HCT116 (cell line): ENCODE measurements at regions of chr2 and their contacts with region 1.

Region 1: DNA sequence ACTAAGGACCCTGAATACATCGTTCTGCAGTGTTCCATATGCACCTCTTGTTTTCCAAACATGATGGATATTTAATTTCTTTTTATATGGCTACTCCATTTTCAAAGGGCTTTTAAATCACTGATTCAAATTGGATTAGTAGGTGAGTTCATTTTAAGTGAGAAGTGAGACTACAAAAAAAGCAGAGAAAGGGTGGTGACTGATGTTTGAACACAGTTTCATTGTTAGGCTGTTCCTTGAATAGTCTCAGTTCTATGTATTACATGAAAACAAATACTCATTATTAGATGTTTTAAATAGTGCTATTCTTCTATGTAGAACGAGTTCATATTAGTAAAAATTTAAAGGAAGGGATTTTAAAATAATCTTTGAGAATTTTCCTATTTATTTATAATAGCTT is 72.7 kb upstream of the STON1 start:
- DNase-seq: no peak
- ATAC-seq: no peak
- H3K4me3 ChIP-seq: no peak overlapping the region
- H3K27ac ChIP-seq: no peak overlapping the region
- H3K4me1 ChIP-seq: no peaks in the 10 kb centered on the region
- H3K27me3 ChIP-seq: no peaks in the 10 kb centered on the region
- CTCF ChIP-seq: no peak
- POLR2A ChIP-seq: no peak
- RAD21 ChIP-seq: no peak

Region 2: GRCh38 chr2:47457268-47457667 is 1000.0 kb before region 1 on chr2:
- CTCF ChIA-PET with region 1: no interaction called
- POLR2A ChIA-PET with region 1: no interaction called
- RAD21 ChIA-PET with region 1: no interaction called
- intact Hi-C with region 1: no loop called
- DNase-seq: no peak
- ATAC-seq: no peak
- H3K4me3 ChIP-seq: no peak overlapping the region
- H3K27ac ChIP-seq: no peak overlapping the region
- H3K4me1 ChIP-seq: no peaks in the 10 kb centered on the region
- H3K27me3 ChIP-seq: no peaks in the 10 kb centered on the region
- CTCF ChIP-seq: no peak
- POLR2A ChIP-seq: no peak
- RAD21 ChIP-seq: no peak

Region 3: DNA sequence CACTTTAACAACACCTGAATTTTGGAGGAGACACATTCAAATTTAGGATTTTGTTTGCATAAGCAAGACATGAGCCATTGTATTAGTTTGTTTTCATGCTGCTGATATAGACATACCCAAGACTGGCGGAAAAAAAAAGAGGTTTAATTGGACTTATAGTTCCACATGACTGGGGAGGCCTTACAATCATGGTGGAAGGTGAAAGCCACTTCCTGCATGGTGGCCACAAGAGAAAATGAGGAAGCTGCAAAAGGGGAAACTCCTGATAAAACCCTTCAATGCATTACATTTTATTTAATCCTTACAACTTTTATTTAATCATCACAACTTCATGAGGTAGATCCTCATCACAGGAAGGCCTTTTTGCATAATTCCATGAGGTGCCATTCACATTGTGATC is 169.3 kb before region 1 on chr2:
- CTCF ChIA-PET with region 1: no interaction called
- POLR2A ChIA-PET with region 1: no interaction called
- RAD21 ChIA-PET with region 1: no interaction called
- intact Hi-C with region 1: no loop called
- DNase-seq: no peak
- ATAC-seq: no peak
- H3K4me3 ChIP-seq: no peak overlapping the region
- H3K27ac ChIP-seq: no peak overlapping the region
- H3K4me1 ChIP-seq: no peaks in the 10 kb centered on the region
- H3K27me3 ChIP-seq: no peaks in the 10 kb centered on the region
- CTCF ChIP-seq: no peak
- POLR2A ChIP-seq: no peak
- RAD21 ChIP-seq: no peak

Region 4: DNA sequence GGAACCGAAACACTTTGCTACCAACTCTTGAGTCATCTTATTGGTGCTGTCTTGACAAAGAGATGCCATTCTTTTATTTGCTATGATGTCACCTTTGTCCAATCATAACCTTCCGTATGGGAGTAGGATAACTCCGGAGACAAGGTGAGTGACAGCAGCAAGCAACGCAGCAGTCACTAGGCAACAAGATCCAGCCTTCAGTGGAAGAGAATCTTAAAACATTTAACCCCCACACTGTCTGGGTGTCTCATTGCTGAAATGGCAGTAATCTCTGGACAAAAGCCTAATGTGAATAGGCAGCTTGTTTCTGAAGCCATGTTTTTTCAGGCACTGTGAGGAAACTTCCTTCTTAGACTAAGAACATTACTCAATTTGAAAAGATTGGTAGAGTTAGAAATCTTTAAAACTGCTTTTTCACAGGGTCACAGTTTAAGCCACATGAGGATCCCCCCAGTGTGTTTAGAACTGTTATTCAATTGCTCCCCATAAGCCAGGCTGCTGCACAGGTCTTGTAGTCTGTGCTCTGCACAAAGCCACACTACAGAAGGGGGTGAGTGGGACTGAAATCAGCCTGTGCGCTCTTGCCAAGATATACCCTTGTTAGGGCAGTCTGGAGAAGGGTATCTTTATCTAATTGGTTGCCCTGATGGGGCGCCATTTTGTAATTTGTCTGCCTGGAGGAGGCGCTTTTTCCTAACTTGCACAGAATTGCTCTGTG is 58.8 kb before region 1 on chr2:
- CTCF ChIA-PET with region 1: no interaction called
- POLR2A ChIA-PET with region 1: no interaction called
- RAD21 ChIA-PET with region 1: no interaction called
- intact Hi-C with region 1: no loop called
- DNase-seq: no peak
- ATAC-seq: no peak
- H3K4me3 ChIP-seq: no peak overlapping the region
- H3K27ac ChIP-seq: no peak overlapping the region
- H3K4me1 ChIP-seq: no peaks in the 10 kb centered on the region
- H3K27me3 ChIP-seq: no peaks in the 10 kb centered on the region
- CTCF ChIP-seq: no peak
- POLR2A ChIP-seq: no peak
- RAD21 ChIP-seq: no peak

Region 5: GRCh38 chr2:48471048-48471474 is 13.8 kb after region 1 on chr2:
- CTCF ChIA-PET with region 1: interaction called, 11 read pairs
- POLR2A ChIA-PET with region 1: no interaction called
- RAD21 ChIA-PET with region 1: interaction called in 1 of 2 experiments, 3 read pairs
- intact Hi-C with region 1: no loop called
- DNase-seq: peak; percentile 45
- ATAC-seq: peak; percentile 91
- H3K4me3 ChIP-seq: no peak overlapping the region
- H3K27ac ChIP-seq: no peak overlapping the region
- H3K4me1 ChIP-seq: peaks cover 4 to 5% of the 10 kb centered on the region in 2 experiments
- H3K27me3 ChIP-seq: no peaks in the 10 kb centered on the region
- CTCF ChIP-seq: peak; percentile 51 to 85 (median 59); a peak in 5 of 6 replicates
- POLR2A ChIP-seq: no peak
- RAD21 ChIP-seq: peak; percentile 64

Region 6: DNA sequence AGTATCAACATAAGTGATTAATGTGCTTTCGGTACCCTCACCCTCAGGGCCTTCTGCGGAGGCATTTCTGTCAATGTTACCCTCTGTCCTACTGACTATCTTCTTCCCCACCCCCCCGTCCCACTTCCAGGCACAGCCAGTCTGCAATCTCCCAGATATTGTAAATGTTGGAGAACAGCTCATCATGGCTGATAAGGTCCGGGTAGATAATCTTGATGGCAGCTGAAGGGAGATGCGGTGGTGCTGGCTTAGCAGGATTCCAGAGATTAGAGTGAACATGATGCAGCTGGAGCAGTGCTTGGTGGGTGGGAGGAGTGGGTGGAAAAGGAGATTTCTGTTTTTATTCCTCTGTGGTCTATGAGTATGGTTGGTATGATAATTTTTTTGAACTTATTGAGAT is 175.9 kb after region 1 on chr2:
- CTCF ChIA-PET with region 1: no interaction called
- POLR2A ChIA-PET with region 1: no interaction called
- RAD21 ChIA-PET with region 1: no interaction called
- intact Hi-C with region 1: no loop called
- DNase-seq: no peak
- ATAC-seq: no peak
- H3K4me3 ChIP-seq: no peak overlapping the region
- H3K27ac ChIP-seq: no peak overlapping the region
- H3K4me1 ChIP-seq: no peaks in the 10 kb centered on the region
- H3K27me3 ChIP-seq: no peaks in the 10 kb centered on the region
- CTCF ChIP-seq: no peak
- POLR2A ChIP-seq: no peak
- RAD21 ChIP-seq: no peak